SK-N-SH (cell line): ENCODE measurements at regions of chr3 and their contacts with region 1.

Region 1: GRCh38 chr3:124552239-124552638 is 178.0 kb upstream of the UMPS start:
- DNase-seq: no peak
- H3K4me3 ChIP-seq: no peak overlapping the region
- H3K27ac ChIP-seq: peak overlapping the region in 1 of 2 experiments; percentile 29; a peak in 1 of 4 replicates
- H3K4me1 ChIP-seq: peaks cover 4 to 27% of the 10 kb centered on the region in 2 experiments; a peak in 3 of 4 replicates
- H3K27me3 ChIP-seq: no peaks in the 10 kb centered on the region
- CTCF ChIP-seq: no peak
- EP300 ChIP-seq: no peak
- RAD21 ChIP-seq: no peak

Region 2: GRCh38 chr3:124512881-124513609 is 39.2 kb before region 1 on chr3:
- CTCF ChIA-PET with region 1: no interaction called
- POLR2A ChIA-PET with region 1: no interaction called
- DNase-seq: no peak
- H3K4me3 ChIP-seq: no peak overlapping the region
- H3K27ac ChIP-seq: no peak overlapping the region
- H3K4me1 ChIP-seq: no peaks in the 10 kb centered on the region
- H3K27me3 ChIP-seq: no peaks in the 10 kb centered on the region
- CTCF ChIP-seq: no peak
- EP300 ChIP-seq: no peak
- RAD21 ChIP-seq: no peak

Region 3: DNA sequence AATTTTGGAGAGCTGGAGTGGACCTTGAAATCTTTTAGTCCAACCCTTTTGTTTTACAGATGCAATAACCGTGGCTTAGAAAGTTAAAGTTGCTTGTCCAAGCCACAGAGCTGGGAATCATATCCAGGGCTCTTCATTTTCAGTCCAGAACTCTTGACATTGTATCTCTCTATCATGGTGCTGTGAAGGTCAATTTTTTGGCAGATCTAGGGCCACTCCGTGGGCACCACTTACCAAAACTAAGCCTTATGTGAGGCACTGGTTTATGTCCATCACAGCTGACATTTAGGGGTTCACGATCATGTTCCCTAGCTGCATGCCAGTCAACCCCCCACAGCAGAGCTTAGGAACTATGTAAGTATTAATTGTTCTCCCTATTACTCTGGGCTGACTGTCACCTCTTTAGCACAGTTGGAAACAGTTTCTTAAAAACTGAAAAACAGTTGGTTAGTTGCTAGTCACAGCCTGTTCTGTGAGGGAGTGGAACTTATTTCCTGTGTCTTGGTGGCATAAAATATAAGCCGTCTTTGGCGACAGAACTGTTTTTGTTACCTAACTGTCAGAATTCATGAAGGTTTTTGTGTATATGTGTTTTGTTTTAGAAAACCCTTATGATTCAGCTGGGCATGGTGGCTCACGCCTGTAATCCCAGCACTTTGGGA is 11.6 kb before region 1 on chr3:
- CTCF ChIA-PET with region 1: interaction called, 26 read pairs
- POLR2A ChIA-PET with region 1: no interaction called
- DNase-seq: no peak
- H3K4me3 ChIP-seq: no peak overlapping the region
- H3K27ac ChIP-seq: no peak overlapping the region
- H3K4me1 ChIP-seq: no peaks in the 10 kb centered on the region
- H3K27me3 ChIP-seq: no peaks in the 10 kb centered on the region
- CTCF ChIP-seq: no peak
- EP300 ChIP-seq: no peak
- RAD21 ChIP-seq: no peak

Region 4: GRCh38 chr3:124650798-124651197 is 98.6 kb after region 1 on chr3:
- CTCF ChIA-PET with region 1: no interaction called
- POLR2A ChIA-PET with region 1: no interaction called
- DNase-seq: no peak
- H3K4me3 ChIP-seq: no peak overlapping the region
- H3K27ac ChIP-seq: no peak overlapping the region
- H3K4me1 ChIP-seq: peaks cover 0 to 5% of the 10 kb centered on the region in 2 experiments; a peak in 1 of 4 replicates
- H3K27me3 ChIP-seq: no peaks in the 10 kb centered on the region
- CTCF ChIP-seq: no peak
- EP300 ChIP-seq: no peak
- RAD21 ChIP-seq: no peak

Region 5: GRCh38 chr3:124893526-124893925 is 341.3 kb after region 1 on chr3:
- CTCF ChIA-PET with region 1: no interaction called
- POLR2A ChIA-PET with region 1: no interaction called
- DNase-seq: no peak
- H3K4me3 ChIP-seq: no peak overlapping the region
- H3K27ac ChIP-seq: no peak overlapping the region
- H3K4me1 ChIP-seq: peaks cover 0 to 1% of the 10 kb centered on the region in 2 experiments; a peak in 1 of 4 replicates
- H3K27me3 ChIP-seq: no peaks in the 10 kb centered on the region
- CTCF ChIP-seq: no peak
- EP300 ChIP-seq: no peak
- RAD21 ChIP-seq: no peak